Caco-2 (cell line): ENCODE measurements at regions of chr12 and their contacts with region 1.

Region 1: GRCh38 chr12:110600254-110600653 is 13.7 kb upstream of the TCTN1 start:
- DNase-seq: peak in 1 of 2 experiments; percentile 48
- H3K4me3 ChIP-seq: no peak overlapping the region
- H3K4me3 Mint-ChIP-seq: no peak overlapping the region
- H3K27ac Mint-ChIP-seq: no peak overlapping the region
- H3K4me1 ChIP-seq: no peaks in the 10 kb centered on the region
- H3K4me1 Mint-ChIP-seq: no peaks in the 10 kb centered on the region
- H3K27me3 ChIP-seq: no peaks in the 10 kb centered on the region
- H3K27me3 Mint-ChIP-seq: no peaks in the 10 kb centered on the region
- CTCF ChIP-seq: peak; percentile 10 to 68

Region 2: DNA sequence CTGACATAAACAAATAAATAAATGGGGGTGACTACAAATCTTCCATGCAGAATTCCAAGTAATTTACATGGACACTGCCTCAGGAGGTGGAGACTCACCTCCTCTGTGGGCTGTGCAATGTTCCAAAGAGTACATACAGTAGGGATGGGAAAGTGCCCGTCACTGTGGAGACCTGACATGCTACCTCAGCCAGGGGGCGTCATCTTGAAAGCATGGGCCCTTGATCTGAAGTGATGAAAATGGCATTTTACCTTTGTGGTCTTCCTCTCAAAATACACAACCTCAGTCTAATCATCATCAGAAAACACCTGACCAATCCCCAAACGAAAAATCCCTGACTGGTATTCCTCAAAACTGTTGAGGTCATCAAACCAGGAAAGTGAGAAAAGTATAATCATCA is 245.2 kb before region 1 on chr12:
- CTCF ChIA-PET with region 1: no interaction called
- POLR2A ChIA-PET with region 1: no interaction called
- intact Hi-C with region 1: loop called (anchors 1 kb)
- DNase-seq: peak; percentile 46 to 56
- H3K4me3 ChIP-seq: no peak overlapping the region
- H3K4me3 Mint-ChIP-seq: no peak overlapping the region
- H3K27ac Mint-ChIP-seq: no peak overlapping the region
- H3K4me1 ChIP-seq: no peaks in the 10 kb centered on the region
- H3K4me1 Mint-ChIP-seq: no peaks in the 10 kb centered on the region
- H3K27me3 ChIP-seq: no peaks in the 10 kb centered on the region
- H3K27me3 Mint-ChIP-seq: no peaks in the 10 kb centered on the region
- CTCF ChIP-seq: peak in 1 of 2 experiments; percentile 62

Region 3: DNA sequence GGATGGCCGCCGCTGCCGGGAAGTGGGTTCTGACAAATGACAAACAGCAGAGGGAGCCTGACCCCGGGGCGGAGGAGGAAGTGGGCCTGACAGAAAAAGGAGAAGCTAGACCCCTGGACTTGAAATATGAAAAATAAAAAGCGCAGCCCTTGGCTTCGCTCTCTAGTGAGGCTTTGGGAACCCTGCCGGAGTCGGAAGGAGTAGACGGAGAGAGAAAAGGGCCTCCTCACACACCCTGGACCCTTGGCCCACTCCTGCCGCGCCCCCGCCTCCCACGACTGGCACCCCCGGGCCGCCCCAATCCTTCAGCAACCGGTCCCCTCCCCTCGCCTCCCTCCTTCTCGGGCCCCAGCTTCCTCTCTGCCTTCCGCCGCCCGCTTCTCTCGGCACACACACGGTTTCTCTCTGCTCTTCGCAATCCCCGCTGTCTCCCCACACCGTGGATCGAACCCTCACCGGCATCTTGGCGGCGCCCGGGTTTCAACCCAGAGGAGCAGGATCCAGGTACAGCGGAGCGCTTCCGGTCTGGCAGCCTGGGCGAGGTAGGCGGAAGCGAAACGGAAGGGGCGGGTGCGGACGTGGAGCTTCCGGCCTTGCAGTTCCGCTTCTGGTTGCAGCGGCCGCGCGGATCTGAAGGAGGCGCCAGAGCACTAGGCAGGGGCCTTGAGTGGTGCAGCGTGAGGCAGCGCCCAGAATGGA is 150.3 kb before region 1 on chr12 and contains the start of gene ARPC3:
- CTCF ChIA-PET with region 1: interaction called, 25 read pairs
- POLR2A ChIA-PET with region 1: no interaction called
- intact Hi-C with region 1: loop called (anchors 1 kb)
- DNase-seq: peak; percentile 96
- H3K4me3 ChIP-seq: peak within 1 kb of the TSS; percentile 90
- H3K4me3 Mint-ChIP-seq: peak within 1 kb of the TSS; percentile 85
- H3K27ac Mint-ChIP-seq: peak within 1 kb of the TSS; percentile 98
- H3K4me1 ChIP-seq: peaks cover 5% of the 10 kb centered on the region
- H3K4me1 Mint-ChIP-seq: no peaks in the 10 kb centered on the region
- H3K27me3 ChIP-seq: no peaks in the 10 kb centered on the region
- H3K27me3 Mint-ChIP-seq: no peaks in the 10 kb centered on the region
- CTCF ChIP-seq: peak; percentile 79 to 89
- total RNA-seq, gene ARPC3: 302 and 309 TPM in 2 replicates

Region 4: DNA sequence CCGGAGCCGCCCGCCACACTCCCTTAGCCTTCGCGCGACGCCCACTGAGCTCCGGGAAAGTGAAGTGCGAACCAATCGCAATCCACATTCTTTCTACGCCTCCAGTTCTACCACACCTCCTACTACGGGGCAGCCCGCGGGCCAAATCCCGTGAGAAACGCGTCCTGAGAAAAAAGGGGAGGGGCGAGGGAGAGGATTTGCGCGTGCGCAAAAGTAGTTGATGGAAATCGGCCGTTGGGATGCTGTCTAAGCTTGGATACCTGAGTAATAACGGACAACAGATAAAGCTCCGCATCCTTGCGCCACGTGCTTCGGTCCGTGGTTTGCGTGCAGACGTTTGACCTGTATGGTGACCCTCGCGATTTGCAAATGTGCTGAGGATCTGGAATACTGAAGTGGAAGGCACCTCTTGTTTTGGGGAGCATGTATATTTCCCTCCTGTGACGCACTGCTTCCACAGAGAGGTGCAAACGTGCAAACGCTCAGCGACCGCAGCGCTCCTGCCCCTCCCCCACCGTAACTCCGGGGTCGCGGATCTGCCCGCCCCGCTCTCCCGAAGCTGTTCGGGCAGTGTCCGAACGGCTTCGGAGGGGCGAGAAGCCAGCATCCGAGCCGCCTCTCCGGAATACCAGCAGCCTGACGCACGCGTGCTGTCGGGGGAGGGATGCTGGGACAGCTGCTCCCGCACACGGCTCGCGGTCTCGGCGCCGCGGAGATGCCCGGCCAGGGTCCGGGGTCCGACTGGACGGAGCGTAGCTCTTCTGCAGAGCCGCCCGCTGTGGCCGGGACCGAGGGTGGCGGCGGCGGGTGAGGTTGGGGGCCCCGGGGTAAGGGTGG is 131.8 kb before region 1 on chr12 and contains the starts of genes FAM216A and GPN3:
- CTCF ChIA-PET with region 1: interaction called, 15 read pairs
- POLR2A ChIA-PET with region 1: interaction called, 7 read pairs
- intact Hi-C with region 1: loop called (anchors 1 kb)
- DNase-seq: peak; percentile 97 to 98
- H3K4me3 ChIP-seq: peak within 1 kb of the TSS; percentile 62
- H3K4me3 Mint-ChIP-seq: peak within 1 kb of the TSS; percentile 82
- H3K27ac Mint-ChIP-seq: peak within 1 kb of the TSS; percentile 94
- H3K4me1 ChIP-seq: no peaks in the 10 kb centered on the region
- H3K4me1 Mint-ChIP-seq: no peaks in the 10 kb centered on the region
- H3K27me3 ChIP-seq: no peaks in the 10 kb centered on the region
- H3K27me3 Mint-ChIP-seq: no peaks in the 10 kb centered on the region
- CTCF ChIP-seq: no peak
- total RNA-seq, gene FAM216A: 13.1 and 15.9 TPM in 2 replicates
- total RNA-seq, gene GPN3: 35.0 and 39.0 TPM in 2 replicates

Region 5: GRCh38 chr12:110508071-110508586 is 92.1 kb before region 1 on chr12:
- CTCF ChIA-PET with region 1: interaction called, 4 read pairs
- POLR2A ChIA-PET with region 1: no interaction called
- intact Hi-C with region 1: loop called (anchors 1 kb)
- DNase-seq: no peak
- H3K4me3 ChIP-seq: no peak overlapping the region
- H3K4me3 Mint-ChIP-seq: no peak overlapping the region
- H3K27ac Mint-ChIP-seq: no peak overlapping the region
- H3K4me1 ChIP-seq: no peaks in the 10 kb centered on the region
- H3K4me1 Mint-ChIP-seq: no peaks in the 10 kb centered on the region
- H3K27me3 ChIP-seq: no peaks in the 10 kb centered on the region
- H3K27me3 Mint-ChIP-seq: no peaks in the 10 kb centered on the region
- CTCF ChIP-seq: no peak

Region 6: DNA sequence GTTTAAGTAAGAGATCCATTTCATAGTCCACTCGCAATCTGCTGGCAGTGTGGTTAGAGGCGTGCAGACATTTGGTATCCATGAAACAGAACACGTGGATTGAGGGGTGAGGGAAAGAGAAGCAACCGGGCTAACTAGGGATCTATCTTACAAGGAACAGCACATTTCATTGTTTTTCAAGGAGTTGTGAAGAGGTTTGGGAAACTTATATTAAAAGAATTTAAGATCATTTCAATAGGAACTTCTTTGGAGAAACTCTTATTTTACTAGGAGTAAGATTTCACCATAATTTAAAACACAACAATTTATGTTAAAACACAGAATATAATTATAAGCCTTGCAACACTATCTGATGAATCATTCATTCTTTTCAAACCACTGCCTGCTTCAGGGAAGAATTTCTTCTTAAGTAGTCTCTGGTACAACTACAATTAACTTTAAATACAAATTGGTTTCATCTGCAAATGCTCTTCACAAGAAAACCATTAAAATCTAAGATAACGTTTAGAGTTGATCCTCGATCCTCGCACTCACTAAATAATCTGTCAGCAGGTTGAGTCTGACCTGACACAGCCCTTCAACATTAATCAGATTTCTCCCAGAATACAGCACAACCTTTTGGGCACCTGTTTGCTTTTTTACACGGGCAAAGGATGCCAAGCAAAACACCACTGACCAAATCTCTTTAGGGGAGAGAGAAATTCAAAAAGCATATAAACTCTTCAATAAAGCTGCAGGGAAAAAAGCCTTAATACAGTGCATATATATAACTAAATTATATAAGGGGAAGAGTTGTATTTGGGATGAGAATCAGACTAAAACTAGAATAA is 44.5 kb before region 1 on chr12:
- CTCF ChIA-PET with region 1: interaction called, 9 read pairs
- POLR2A ChIA-PET with region 1: no interaction called
- intact Hi-C with region 1: loop called (anchors 1 kb)
- DNase-seq: no peak
- H3K4me3 ChIP-seq: no peak overlapping the region
- H3K4me3 Mint-ChIP-seq: no peak overlapping the region
- H3K27ac Mint-ChIP-seq: no peak overlapping the region
- H3K4me1 ChIP-seq: no peaks in the 10 kb centered on the region
- H3K4me1 Mint-ChIP-seq: no peaks in the 10 kb centered on the region
- H3K27me3 ChIP-seq: no peaks in the 10 kb centered on the region
- H3K27me3 Mint-ChIP-seq: no peaks in the 10 kb centered on the region
- CTCF ChIP-seq: no peak

Region 7: GRCh38 chr12:110583137-110584059 is 16.9 kb before region 1 on chr12 and contains the start of gene PPTC7:
- CTCF ChIA-PET with region 1: interaction called, 3 read pairs
- POLR2A ChIA-PET with region 1: no interaction called
- intact Hi-C with region 1: loop called (anchors 2 kb)
- DNase-seq: peak; percentile 95
- H3K4me3 ChIP-seq: peak within 1 kb of the TSS; percentile 96
- H3K4me3 Mint-ChIP-seq: peak within 1 kb of the TSS; percentile 92
- H3K27ac Mint-ChIP-seq: peak within 1 kb of the TSS; percentile 85
- H3K4me1 ChIP-seq: peaks cover 22% of the 10 kb centered on the region
- H3K4me1 Mint-ChIP-seq: peaks cover 10% of the 10 kb centered on the region
- H3K27me3 ChIP-seq: no peaks in the 10 kb centered on the region
- H3K27me3 Mint-ChIP-seq: no peaks in the 10 kb centered on the region
- CTCF ChIP-seq: no peak
- total RNA-seq, gene PPTC7: 18.2 and 19.0 TPM in 2 replicates

Region 8: GRCh38 chr12:110790301-110790700 is 190.0 kb after region 1 on chr12:
- CTCF ChIA-PET with region 1: no interaction called
- POLR2A ChIA-PET with region 1: no interaction called
- intact Hi-C with region 1: no loop called
- DNase-seq: no peak
- H3K4me3 ChIP-seq: no peak overlapping the region
- H3K4me3 Mint-ChIP-seq: no peak overlapping the region
- H3K27ac Mint-ChIP-seq: no peak overlapping the region
- H3K4me1 ChIP-seq: no peaks in the 10 kb centered on the region
- H3K4me1 Mint-ChIP-seq: no peaks in the 10 kb centered on the region
- H3K27me3 ChIP-seq: no peaks in the 10 kb centered on the region
- H3K27me3 Mint-ChIP-seq: no peaks in the 10 kb centered on the region
- CTCF ChIP-seq: no peak